B cell (primary cell): ENCODE measurements at regions of chr17 and their contacts with region 1.

Region 1: DNA sequence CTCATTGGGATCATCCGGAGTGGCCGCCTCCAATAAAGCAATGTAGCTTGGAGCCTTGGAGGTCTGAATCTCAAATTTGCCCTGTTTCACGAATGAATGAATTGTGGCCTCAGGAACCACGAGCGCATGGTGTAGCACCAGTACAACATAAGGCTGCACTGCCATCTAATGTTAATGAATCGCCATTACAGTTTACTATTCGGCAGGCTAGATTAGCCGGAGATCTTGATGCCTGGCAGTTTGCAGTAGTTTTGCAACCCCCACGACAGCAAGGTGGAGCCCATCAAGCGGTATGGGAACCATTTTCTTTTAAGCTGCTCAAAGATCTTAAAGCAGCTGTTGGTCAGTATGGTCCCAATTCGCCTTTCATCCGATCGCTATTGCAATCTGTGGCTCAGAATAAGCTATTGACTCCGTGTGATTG is 18.8 kb downstream of the ALOX15B start:
- DNase-seq: peak; percentile 87
- ATAC-seq: peak; percentile 85
- H3K4me3 ChIP-seq: no peak overlapping the region
- H3K4me3 Mint-ChIP-seq: no peak overlapping the region
- H3K27ac ChIP-seq: no peak overlapping the region
- H3K27ac Mint-ChIP-seq: no peak overlapping the region
- H3K4me1 ChIP-seq: peaks cover 22 to 25% of the 10 kb centered on the region in 2 donors
- H3K4me1 Mint-ChIP-seq: peaks cover 29% of the 10 kb centered on the region
- H3K27me3 ChIP-seq: peaks cover 0 to 24% (median 9%) of the 10 kb centered on the region in 4 experiments
- H3K27me3 Mint-ChIP-seq: peaks cover 31% of the 10 kb centered on the region
- CTCF ChIP-seq: peak; percentile 86

Region 2: GRCh38 chr17:7740481-7741001 is 317.2 kb before region 1 on chr17:
- CTCF ChIA-PET with region 1: interaction called, 32 read pairs
- POLR2A ChIA-PET with region 1: no interaction called
- intact Hi-C with region 1: loop called (anchors 1 kb)
- DNase-seq: no peak
- ATAC-seq: no peak
- H3K4me3 ChIP-seq: no peak overlapping the region
- H3K4me3 Mint-ChIP-seq: no peak overlapping the region
- H3K27ac ChIP-seq: no peak overlapping the region
- H3K27ac Mint-ChIP-seq: peak overlapping the region; percentile 46
- H3K4me1 ChIP-seq: no peaks in the 10 kb centered on the region
- H3K4me1 Mint-ChIP-seq: no peaks in the 10 kb centered on the region
- H3K27me3 ChIP-seq: peaks cover 0 to 5% (median 0%) of the 10 kb centered on the region in 4 experiments
- H3K27me3 Mint-ChIP-seq: peaks cover 38% of the 10 kb centered on the region
- CTCF ChIP-seq: no peak

Region 3: GRCh38 chr17:7862692-7863437 is 194.8 kb before region 1 on chr17:
- CTCF ChIA-PET with region 1: interaction called, 121 read pairs
- POLR2A ChIA-PET with region 1: no interaction called
- intact Hi-C with region 1: loop called (anchors 1 kb)
- DNase-seq: peak; percentile 74
- ATAC-seq: no peak
- H3K4me3 ChIP-seq: no peak overlapping the region
- H3K4me3 Mint-ChIP-seq: no peak overlapping the region
- H3K27ac ChIP-seq: no peak overlapping the region
- H3K27ac Mint-ChIP-seq: peak overlapping the region; percentile 5
- H3K4me1 ChIP-seq: peaks cover 9 to 18% of the 10 kb centered on the region in 2 donors
- H3K4me1 Mint-ChIP-seq: peaks cover 9% of the 10 kb centered on the region
- H3K27me3 ChIP-seq: no peaks in the 10 kb centered on the region
- H3K27me3 Mint-ChIP-seq: no peaks in the 10 kb centered on the region
- CTCF ChIP-seq: peak; percentile 84

Region 4: DNA sequence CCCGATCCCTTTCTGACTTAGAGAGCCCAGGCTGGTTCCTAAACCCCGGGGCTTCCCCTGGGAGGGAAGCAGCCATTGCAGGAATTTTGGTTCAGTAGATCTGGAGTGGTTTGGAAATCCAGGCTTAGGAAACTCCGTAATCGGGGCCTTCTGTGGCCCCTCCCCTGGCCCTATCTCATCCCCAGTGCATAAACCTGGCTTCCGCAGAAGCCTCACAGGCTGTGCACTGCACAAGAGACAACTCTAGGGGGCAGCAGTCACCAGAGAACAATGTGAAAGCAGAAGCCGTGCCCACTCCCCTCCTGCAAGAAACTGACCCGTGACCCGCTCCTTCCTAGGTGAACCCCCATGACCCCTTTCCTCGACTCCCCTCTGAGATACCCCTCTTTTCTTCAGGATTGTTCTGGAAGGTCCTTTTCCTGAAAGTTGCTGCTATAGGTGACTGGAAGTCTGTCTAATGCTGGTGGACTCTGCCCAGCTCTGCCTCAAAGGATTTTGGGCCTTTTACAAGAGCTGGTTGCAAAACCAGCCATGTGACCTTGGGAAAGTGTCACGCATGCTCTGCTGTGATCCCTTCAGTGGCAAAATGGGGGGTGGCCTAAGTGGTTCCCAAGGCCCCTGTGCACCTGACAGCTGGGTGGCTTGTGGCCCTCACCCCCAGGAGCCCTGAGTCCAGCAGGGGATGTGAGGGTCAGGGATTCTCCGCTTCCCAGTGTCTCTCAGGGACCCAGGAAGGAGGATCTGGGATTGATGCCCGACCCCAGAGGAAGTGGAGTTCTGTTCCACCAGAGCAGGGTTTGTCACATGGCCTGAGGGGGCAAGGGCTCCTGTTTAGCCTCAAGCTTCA is 40.8 kb before region 1 on chr17:
- CTCF ChIA-PET with region 1: interaction called, 9 read pairs
- POLR2A ChIA-PET with region 1: no interaction called
- intact Hi-C with region 1: loop called (anchors 1 kb)
- DNase-seq: peak; percentile 58
- ATAC-seq: peak; percentile 64
- H3K4me3 ChIP-seq: peak overlapping the region in 4 of 5 experiments; percentile 23 to 54 (median 42)
- H3K4me3 Mint-ChIP-seq: peak overlapping the region; percentile 76
- H3K27ac ChIP-seq: no peak overlapping the region
- H3K27ac Mint-ChIP-seq: no peak overlapping the region
- H3K4me1 ChIP-seq: peaks cover 27 to 28% of the 10 kb centered on the region in 2 donors
- H3K4me1 Mint-ChIP-seq: peaks cover 25% of the 10 kb centered on the region
- H3K27me3 ChIP-seq: peaks cover 0 to 61% (median 20%) of the 10 kb centered on the region in 4 experiments
- H3K27me3 Mint-ChIP-seq: peaks cover 66% of the 10 kb centered on the region
- CTCF ChIP-seq: peak; percentile 61

Region 5: GRCh38 chr17:8109661-8110464 is 52.2 kb after region 1 on chr17:
- CTCF ChIA-PET with region 1: interaction called, 49 read pairs
- POLR2A ChIA-PET with region 1: no interaction called
- intact Hi-C with region 1: loop called (anchors 1 kb)
- DNase-seq: peak; percentile 87
- ATAC-seq: peak; percentile 92
- H3K4me3 ChIP-seq: peak overlapping the region in 4 of 5 experiments; percentile 37 to 56 (median 52)
- H3K4me3 Mint-ChIP-seq: peak overlapping the region; percentile 68
- H3K27ac ChIP-seq: no peak overlapping the region
- H3K27ac Mint-ChIP-seq: peak overlapping the region; percentile 53
- H3K4me1 ChIP-seq: peaks cover 10 to 11% of the 10 kb centered on the region in 2 donors
- H3K4me1 Mint-ChIP-seq: peaks cover 10% of the 10 kb centered on the region
- H3K27me3 ChIP-seq: peaks cover 0 to 52% (median 32%) of the 10 kb centered on the region in 4 experiments
- H3K27me3 Mint-ChIP-seq: peaks cover 36% of the 10 kb centered on the region
- CTCF ChIP-seq: peak; percentile 93

Region 6: DNA sequence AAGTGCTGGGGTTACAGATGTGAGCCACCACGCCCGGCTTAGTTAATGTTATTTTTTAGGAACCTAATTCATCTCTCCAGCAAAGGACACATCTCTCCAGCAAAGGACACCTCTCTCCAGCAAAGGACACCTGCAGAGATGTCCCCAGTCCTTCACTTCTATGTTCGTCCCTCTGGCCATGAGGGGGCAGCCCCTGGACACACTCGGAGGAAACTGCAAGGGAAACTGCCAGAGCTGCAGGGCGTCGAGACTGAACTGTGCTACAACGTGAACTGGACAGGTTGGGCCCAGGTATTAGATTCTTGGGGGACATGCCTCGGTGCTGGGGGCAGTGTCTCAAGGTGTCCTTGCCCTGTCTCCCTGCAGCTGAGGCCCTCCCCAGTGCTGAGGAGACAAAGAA is 196.1 kb after region 1 on chr17:
- CTCF ChIA-PET with region 1: no interaction called
- POLR2A ChIA-PET with region 1: no interaction called
- intact Hi-C with region 1: no loop called
- DNase-seq: no peak
- ATAC-seq: no peak
- H3K4me3 ChIP-seq: no peak overlapping the region
- H3K4me3 Mint-ChIP-seq: no peak overlapping the region
- H3K27ac ChIP-seq: no peak overlapping the region
- H3K27ac Mint-ChIP-seq: no peak overlapping the region
- H3K4me1 ChIP-seq: peaks cover 8 to 11% of the 10 kb centered on the region in 2 donors
- H3K4me1 Mint-ChIP-seq: peaks cover 16% of the 10 kb centered on the region
- H3K27me3 ChIP-seq: no peaks in the 10 kb centered on the region
- H3K27me3 Mint-ChIP-seq: no peaks in the 10 kb centered on the region
- CTCF ChIP-seq: no peak

Region 7: DNA sequence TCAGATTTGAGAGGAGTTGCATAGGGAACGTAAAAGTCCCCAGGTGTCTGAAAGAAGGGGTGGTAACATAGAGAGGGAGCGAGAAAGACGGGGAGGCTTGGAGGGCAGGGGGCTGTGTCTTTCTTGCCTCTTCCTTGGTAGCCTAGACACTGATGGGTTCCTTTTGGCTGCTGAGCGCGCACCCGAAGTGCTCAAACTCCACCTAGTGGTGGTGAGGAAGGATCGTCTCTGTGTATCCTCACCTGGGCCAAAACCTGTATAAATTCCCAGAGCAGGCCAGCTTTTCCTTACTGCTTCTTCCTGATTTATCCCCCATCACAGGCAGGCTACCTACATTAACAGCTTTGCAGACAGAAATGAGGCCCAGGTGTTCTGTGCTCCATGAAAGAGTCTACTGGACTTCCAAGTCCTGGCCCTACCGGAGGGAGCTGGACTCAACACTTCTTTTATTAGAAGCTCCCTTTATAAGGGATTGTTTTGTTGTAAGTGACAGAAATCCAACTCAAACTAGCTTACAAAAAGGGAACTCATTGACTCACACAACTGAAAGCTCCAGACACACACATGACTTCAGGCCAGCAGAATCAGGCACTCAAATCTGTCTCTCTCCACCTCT is 243.0 kb after region 1 on chr17:
- CTCF ChIA-PET with region 1: interaction called, 66 read pairs
- POLR2A ChIA-PET with region 1: no interaction called
- intact Hi-C with region 1: loop called (anchors 1 kb)
- DNase-seq: peak; percentile 84
- ATAC-seq: peak; percentile 95
- H3K4me3 ChIP-seq: no peak overlapping the region
- H3K4me3 Mint-ChIP-seq: no peak overlapping the region
- H3K27ac ChIP-seq: peak overlapping the region in 1 of 2 donors; percentile 1
- H3K27ac Mint-ChIP-seq: peak overlapping the region; percentile 7
- H3K4me1 ChIP-seq: peaks cover 3 to 4% of the 10 kb centered on the region in 2 donors
- H3K4me1 Mint-ChIP-seq: peaks cover 8% of the 10 kb centered on the region
- H3K27me3 ChIP-seq: no peaks in the 10 kb centered on the region
- H3K27me3 Mint-ChIP-seq: no peaks in the 10 kb centered on the region
- CTCF ChIP-seq: peak; percentile 81